ENCODE measurements at regions of chr22 and their contacts with region 1.

Region 1: DNA sequence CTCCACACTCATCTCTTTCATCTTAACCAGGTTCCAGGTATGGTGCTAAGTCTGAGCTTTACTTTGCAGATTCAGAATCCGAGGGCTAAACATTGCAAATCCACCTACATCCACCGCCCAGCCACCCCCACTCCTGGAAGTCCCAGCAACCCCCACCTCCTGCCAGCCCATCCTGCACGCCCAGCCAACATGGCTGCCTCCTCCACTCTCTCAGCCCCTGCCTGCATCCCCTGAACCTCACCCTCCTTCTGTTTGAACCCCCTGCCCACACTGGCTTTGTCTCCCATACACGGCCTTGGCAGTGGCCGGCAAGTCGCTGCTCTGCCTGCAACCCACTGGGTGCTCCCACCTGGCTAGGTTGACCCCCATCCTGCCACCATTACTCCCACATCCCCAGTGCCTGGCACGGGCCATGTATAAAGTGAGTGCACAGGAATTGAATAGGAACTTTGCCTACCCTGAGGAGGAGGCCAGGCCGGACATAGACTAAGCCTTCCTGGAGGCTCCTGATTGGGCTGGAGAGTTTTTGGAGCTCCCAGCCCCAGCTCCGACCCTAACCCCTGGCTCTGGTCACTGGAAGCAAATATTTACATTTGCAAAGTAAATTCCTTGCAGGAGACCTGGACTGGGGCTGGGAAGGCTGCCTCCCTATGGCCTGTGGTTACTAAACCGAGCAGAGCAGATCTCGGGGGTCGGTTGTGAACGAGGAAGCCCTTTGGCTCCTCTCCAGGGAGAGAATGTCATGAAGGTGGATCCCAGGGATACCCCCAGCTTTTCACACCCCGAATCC is 14.4 kb downstream of the EMID1 start:
- DNase-seq: no peak
- ATAC-seq: no peak
- H3K4me3 ChIP-seq: no peak overlapping the region
- H3K27ac ChIP-seq: no peak overlapping the region
- H3K4me1 ChIP-seq: peaks cover 8% of the 10 kb centered on the region
- H3K27me3 ChIP-seq: no peaks in the 10 kb centered on the region
- CTCF ChIP-seq: no peak

Region 2: DNA sequence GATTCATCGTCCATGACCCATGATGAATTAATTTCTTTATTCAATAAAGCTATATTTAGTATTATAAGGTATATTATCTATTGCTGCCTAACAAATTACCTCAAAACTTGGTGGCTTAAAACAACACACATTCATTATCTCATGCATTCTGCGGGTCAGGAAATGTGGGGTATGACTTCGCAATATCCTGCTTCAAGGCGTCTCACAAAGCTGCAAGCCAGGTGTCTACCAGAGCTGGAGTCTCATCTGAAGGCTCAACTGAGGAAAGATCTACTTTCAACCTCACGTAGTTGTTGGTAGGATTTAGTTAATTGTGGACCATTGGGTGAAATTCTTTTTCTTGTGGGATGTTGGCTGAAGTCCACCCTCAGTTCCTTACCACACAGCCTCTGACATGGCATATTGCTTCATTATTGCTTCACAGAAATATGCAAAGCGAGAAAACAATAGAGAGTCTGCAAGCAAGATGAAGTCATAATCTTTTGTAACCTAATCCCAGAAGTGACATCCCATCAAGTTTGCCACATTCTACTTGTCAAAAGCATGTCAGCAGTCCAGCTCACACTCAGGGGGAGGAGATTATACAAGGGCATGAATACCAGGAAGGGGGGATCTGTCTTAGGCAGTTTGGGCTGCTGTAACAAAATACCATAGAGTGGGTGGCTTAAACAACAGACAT is 102.1 kb before region 1 on chr22:
- CTCF ChIA-PET with region 1: no interaction called
- POLR2A ChIA-PET with region 1: interaction called, 12 read pairs
- in situ Hi-C with region 1: no loop called
- intact Hi-C with region 1: no loop called
- DNase-seq: no peak
- ATAC-seq: no peak
- H3K4me3 ChIP-seq: no peak overlapping the region
- H3K27ac ChIP-seq: no peak overlapping the region
- H3K4me1 ChIP-seq: no peaks in the 10 kb centered on the region
- H3K27me3 ChIP-seq: no peaks in the 10 kb centered on the region
- CTCF ChIP-seq: no peak

Region 3: GRCh38 chr22:29320546-29320945 is 100.5 kb after region 1 on chr22:
- CTCF ChIA-PET with region 1: no interaction called
- POLR2A ChIA-PET with region 1: interaction called, 12 read pairs
- in situ Hi-C with region 1: no loop called
- intact Hi-C with region 1: no loop called
- DNase-seq: no peak
- ATAC-seq: peak; percentile 64; the same call in 1 of the 2 replicates
- H3K4me3 ChIP-seq: no peak overlapping the region
- H3K27ac ChIP-seq: no peak overlapping the region
- H3K4me1 ChIP-seq: no peaks in the 10 kb centered on the region
- H3K27me3 ChIP-seq: no peaks in the 10 kb centered on the region
- CTCF ChIP-seq: peak; percentile 44

Region 4: GRCh38 chr22:29443452-29443851 is 223.4 kb after region 1 on chr22:
- CTCF ChIA-PET with region 1: no interaction called
- POLR2A ChIA-PET with region 1: no interaction called
- in situ Hi-C with region 1: no loop called
- intact Hi-C with region 1: no loop called
- DNase-seq: no peak
- ATAC-seq: no peak
- H3K4me3 ChIP-seq: no peak overlapping the region
- H3K27ac ChIP-seq: no peak overlapping the region
- H3K4me1 ChIP-seq: no peaks in the 10 kb centered on the region
- H3K27me3 ChIP-seq: no peaks in the 10 kb centered on the region
- CTCF ChIP-seq: no peak

Measured in Panc1 (cell line).